ENCODE measurements at regions of chr14 and their contacts with region 1.

Region 1: DNA sequence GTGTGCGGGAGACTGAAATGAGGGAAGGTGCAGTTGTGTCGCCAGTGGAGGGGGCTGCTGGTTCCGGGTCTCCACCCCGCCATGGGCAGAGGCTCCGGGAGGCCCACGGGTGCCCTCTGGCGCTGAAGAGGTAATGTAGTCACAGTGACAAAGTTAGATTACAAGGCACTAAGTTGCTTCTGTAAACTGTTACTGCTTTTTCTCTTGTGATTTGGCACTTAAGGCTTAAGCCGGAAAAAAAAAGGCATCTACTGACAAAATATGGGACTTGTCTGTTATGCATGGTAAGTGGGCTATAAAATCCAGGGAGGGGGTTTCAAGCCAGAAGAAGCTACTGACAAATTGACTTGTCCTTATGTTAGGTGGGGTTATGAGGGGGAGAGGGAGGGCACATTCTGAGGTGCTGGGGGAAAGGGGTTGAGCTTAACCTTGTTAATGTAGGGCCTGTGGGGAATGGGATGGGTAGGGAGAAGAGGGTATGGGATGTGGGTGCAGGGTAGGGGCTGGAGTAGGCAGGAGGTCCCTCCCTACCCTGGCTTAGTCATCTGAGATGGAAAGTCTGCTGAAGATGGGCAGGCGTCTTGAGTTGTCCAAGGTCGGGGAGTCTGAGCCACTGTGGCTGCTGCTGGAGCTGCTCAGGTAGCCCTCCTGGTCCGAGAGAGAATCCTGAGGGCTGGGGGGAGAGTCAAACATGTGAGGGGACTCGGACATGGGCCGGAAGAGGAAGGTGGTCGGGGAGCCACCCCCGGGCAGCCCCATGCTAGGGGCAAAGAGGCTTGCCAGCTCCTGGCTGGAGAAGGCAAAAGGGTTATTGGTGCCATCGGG is 3.7 kb downstream of the ZFP36L1 start:
- DNase-seq: peak; percentile 94
- ATAC-seq: peak; percentile 52
- H3K4me3 Mint-ChIP-seq: peak overlapping the region; percentile 87
- H3K27ac Mint-ChIP-seq: peak overlapping the region; percentile 100
- H3K4me1 Mint-ChIP-seq: peaks cover 58% of the 10 kb centered on the region
- H3K27me3 Mint-ChIP-seq: no peaks in the 10 kb centered on the region

Region 2: DNA sequence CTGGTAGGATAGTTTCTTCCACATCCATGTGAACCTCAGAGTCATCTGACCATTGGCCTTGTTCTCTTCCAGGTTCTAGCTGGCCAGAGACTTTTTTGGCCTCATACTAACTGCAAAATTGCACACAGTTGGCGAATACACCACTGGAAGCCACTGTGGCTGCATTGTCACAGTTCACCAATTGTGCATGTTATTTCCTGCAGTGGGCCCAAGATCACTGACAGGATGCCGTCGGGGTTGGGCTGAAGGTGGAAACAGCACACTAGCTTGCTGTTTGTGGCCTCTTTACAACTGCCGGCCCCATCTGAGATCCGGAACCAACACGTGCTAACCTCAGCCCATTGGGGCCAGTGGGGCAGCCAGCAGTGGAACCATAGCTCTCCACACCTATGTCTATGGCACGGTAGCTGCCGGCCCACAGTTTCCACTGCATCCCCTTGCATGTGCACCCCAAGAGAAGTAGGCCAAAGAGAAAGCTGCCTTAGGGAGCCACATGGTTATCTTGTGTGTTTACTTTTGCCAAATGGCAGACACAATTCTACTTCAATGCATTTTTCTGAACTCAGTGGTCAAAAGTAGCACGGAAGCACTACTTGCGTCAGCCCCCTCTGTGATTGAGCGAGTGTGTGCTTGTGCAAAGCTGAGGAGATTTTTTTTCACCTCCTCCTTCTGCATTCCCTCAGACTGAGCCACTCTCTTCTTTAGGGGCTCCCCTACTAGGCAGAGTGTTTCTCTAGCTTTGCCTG is 505.7 kb before region 1 on chr14:
- CTCF ChIA-PET with region 1: interaction called, 10 read pairs
- DNase-seq: peak; percentile 88
- ATAC-seq: peak; percentile 83
- H3K4me3 Mint-ChIP-seq: peak overlapping the region; percentile 45
- H3K27ac Mint-ChIP-seq: peak overlapping the region; percentile 93
- H3K4me1 Mint-ChIP-seq: peaks cover 44% of the 10 kb centered on the region
- H3K27me3 Mint-ChIP-seq: no peaks in the 10 kb centered on the region

Region 3: GRCh38 chr14:68663385-68664076 is 125.7 kb before region 1 on chr14:
- CTCF ChIA-PET with region 1: interaction called, 29 read pairs
- DNase-seq: peak; percentile 76
- ATAC-seq: peak; percentile 93
- H3K4me3 Mint-ChIP-seq: peak overlapping the region; percentile 70
- H3K27ac Mint-ChIP-seq: peak overlapping the region; percentile 76
- H3K4me1 Mint-ChIP-seq: peaks cover 30% of the 10 kb centered on the region
- H3K27me3 Mint-ChIP-seq: no peaks in the 10 kb centered on the region

Region 4: DNA sequence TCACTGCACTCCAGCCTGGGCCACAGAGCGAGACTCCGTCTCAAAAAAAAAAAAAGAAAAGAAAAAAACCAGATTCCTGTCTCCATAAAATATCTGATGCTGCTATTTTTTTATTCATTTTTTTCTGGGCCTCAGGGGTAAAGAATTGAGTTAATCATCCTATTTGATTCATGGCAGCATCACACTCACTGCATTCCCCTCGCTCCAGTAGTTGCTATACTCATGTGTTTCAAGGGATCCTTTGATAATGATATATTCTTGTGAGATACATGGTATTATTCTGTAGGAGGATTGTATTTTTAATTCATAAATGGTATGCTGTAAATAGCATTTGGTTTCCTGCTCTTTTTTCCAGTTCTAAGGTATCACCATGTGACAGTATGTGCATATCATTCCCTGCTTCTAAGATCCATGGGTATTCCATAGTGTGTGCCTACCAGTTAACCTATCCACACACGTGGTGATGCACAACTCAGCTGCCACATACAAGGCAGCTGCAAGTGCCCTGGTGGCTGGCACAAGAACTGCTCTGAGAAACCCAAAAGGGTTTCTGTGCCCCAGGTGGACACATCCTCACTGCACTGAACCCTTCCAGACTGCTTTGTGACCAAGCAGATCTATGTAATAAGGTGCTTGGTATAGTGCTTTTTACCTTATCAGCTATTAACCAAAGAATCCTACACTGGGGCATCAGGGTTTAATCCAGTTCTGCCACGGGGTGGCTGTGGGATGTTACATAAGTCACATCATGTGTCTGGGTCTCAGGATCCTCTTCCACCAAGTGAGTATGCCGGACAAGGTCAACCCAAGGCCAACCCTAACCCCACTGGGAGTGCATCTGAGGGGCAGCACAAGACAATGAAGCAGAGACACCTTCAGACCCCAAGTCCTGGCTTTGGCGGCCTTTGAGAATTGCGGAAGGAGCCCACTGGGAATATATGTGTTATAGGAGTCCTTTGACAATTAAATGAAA is 70.9 kb before region 1 on chr14:
- CTCF ChIA-PET with region 1: interaction called, 20 read pairs
- DNase-seq: no peak
- ATAC-seq: no peak
- H3K4me3 Mint-ChIP-seq: no peak overlapping the region
- H3K27ac Mint-ChIP-seq: no peak overlapping the region
- H3K4me1 Mint-ChIP-seq: peaks cover 20% of the 10 kb centered on the region
- H3K27me3 Mint-ChIP-seq: peaks cover 6% of the 10 kb centered on the region

Region 5: GRCh38 chr14:68762953-68763764 is 26.0 kb before region 1 on chr14:
- CTCF ChIA-PET with region 1: no interaction called
- DNase-seq: no peak
- ATAC-seq: no peak
- H3K4me3 Mint-ChIP-seq: no peak overlapping the region
- H3K27ac Mint-ChIP-seq: no peak overlapping the region
- H3K4me1 Mint-ChIP-seq: peaks cover 9% of the 10 kb centered on the region
- H3K27me3 Mint-ChIP-seq: no peaks in the 10 kb centered on the region

Region 6: GRCh38 chr14:68843471-68844209 is 54.4 kb after region 1 on chr14:
- CTCF ChIA-PET with region 1: interaction called, 14 read pairs
- DNase-seq: peak; percentile 81
- ATAC-seq: peak; percentile 89
- H3K4me3 Mint-ChIP-seq: no peak overlapping the region
- H3K27ac Mint-ChIP-seq: no peak overlapping the region
- H3K4me1 Mint-ChIP-seq: peaks cover 15% of the 10 kb centered on the region
- H3K27me3 Mint-ChIP-seq: peaks cover 13% of the 10 kb centered on the region